Aorta (tissue), 5 donors: ENCODE measurements at regions of chr3 and their contacts with region 1.

Region 1: GRCh38 chr3:169662132-169662842 is 1.2 kb downstream of the MECOM start:
- DNase-seq: peak; percentile 80 to 93
- ATAC-seq: peak; percentile 90
- H3K4me3 ChIP-seq: peak overlapping the region; percentile 78 to 94
- H3K27ac ChIP-seq: peak overlapping the region; percentile 91 to 95
- H3K4me1 ChIP-seq: no peaks in the 10 kb centered on the region
- H3K27me3 ChIP-seq: no peaks in the 10 kb centered on the region

Region 2: GRCh38 chr3:169149349-169149890 is 512.9 kb before region 1 on chr3:
- intact Hi-C with region 1: loop called (anchors 1 to 2 kb)
- DNase-seq: peak; percentile 86 to 94
- ATAC-seq: peak; percentile 90
- H3K4me3 ChIP-seq: peak overlapping the region; percentile 25 to 65
- H3K27ac ChIP-seq: peak overlapping the region in 1 of 2 donors; percentile 38
- H3K4me1 ChIP-seq: peaks cover 0 to 2% of the 10 kb centered on the region in 2 donors
- H3K27me3 ChIP-seq: no peaks in the 10 kb centered on the region

Region 3: DNA sequence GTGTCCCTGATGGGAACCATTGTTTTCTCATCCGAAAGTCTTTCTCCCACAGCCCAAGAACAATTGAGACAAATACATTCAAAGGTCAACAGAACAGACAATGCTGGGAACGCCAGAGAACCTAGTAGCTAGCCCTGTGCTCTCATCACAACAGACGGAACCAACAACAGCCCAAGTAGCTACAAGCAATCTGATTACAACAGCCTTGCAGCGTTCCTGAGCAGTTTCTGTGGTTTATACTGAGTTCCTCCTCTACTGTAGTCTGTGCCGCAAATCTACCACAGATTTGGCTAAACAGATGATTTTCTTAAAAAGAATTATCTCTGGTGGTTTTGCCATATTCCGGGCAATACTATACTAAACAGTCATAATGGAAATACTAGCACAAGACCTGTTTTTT is 434.4 kb before region 1 on chr3:
- intact Hi-C with region 1: loop called (anchors 5 to 10 kb)
- DNase-seq: no peak
- ATAC-seq: peak; percentile 51
- H3K4me3 ChIP-seq: peak overlapping the region in 1 of 2 donors; percentile 21
- H3K27ac ChIP-seq: peak overlapping the region; percentile 39 to 67
- H3K4me1 ChIP-seq: peaks cover 0 to 14% of the 10 kb centered on the region in 2 donors
- H3K27me3 ChIP-seq: no peaks in the 10 kb centered on the region

Region 4: DNA sequence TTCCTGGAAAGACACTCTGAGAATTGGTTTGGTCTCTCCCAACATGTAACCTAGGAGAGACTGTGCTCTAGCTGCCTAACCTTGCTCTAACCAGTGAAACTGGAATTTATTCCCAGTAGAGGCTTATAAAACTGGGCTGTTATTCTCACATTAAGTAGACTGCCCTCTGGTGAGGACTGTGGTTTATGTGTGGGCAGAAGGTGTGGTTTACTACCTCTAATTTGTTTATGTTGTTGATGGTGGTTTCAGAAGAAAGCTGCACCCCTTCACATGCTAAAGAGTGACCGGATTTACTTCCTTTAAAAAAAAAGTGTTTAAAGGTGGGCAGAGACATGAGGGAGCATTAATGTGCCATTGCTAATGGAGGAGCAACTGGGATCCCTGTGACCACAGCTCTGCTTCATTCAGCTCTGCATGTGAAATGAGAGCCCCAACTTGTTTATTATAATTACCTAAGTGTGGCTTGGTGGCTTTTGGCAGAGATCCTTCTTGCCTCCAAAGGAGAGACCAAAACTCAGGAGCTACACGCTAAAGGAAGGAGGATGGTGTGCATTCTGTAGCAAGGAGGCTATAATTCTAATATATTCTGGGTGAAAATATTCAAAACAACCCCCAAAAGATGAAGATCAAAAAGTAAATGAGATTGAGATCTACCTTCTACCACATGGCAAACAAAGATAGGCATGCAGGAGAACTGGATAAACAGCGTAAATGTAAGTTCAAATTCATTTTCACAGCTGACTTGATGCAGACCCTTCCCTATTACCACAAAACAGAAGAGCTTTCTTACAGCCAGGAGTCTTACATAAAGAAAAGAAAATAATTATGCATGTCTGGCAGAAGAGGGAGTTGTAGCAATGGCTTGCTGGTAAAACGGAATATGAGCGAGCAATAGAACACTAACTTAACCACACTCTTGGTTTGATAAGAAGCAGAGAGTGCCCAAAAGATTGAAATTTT is 271.7 kb before region 1 on chr3:
- intact Hi-C with region 1: loop called (anchors 2 to 5 kb)
- DNase-seq: no peak
- ATAC-seq: no peak
- H3K4me3 ChIP-seq: no peak overlapping the region
- H3K27ac ChIP-seq: peak overlapping the region; percentile 36 to 94
- H3K4me1 ChIP-seq: peaks cover 4 to 5% of the 10 kb centered on the region in 2 donors
- H3K27me3 ChIP-seq: no peaks in the 10 kb centered on the region

Region 5: DNA sequence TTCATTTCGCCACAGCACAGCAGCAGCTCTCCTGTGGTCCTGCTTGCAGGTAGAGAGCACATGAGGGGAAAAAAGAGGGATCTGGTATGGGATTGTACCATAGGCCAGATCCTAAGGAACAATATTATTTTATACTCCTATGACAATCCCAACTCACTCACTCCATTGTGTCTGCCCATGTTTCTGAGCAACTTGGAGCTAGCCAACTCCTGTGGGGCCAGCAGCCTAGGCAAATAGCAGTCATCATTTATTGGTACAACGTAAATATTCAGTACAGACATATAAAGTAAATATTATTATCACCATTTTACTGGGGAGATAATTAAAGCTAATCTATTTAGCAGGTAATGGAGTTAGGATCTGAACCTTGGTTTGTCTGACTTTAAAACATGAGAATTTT is 147.2 kb before region 1 on chr3:
- intact Hi-C with region 1: no loop called
- DNase-seq: no peak
- ATAC-seq: no peak
- H3K4me3 ChIP-seq: no peak overlapping the region
- H3K27ac ChIP-seq: no peak overlapping the region
- H3K4me1 ChIP-seq: peaks cover 3% of the 10 kb centered on the region in 2 donors
- H3K27me3 ChIP-seq: no peaks in the 10 kb centered on the region

Region 6: GRCh38 chr3:169552533-169552932 is 109.8 kb before region 1 on chr3:
- intact Hi-C with region 1: loop called (anchors 10 kb)
- DNase-seq: no peak
- ATAC-seq: no peak
- H3K4me3 ChIP-seq: no peak overlapping the region
- H3K27ac ChIP-seq: no peak overlapping the region
- H3K4me1 ChIP-seq: peaks cover 4 to 14% of the 10 kb centered on the region in 2 donors
- H3K27me3 ChIP-seq: no peaks in the 10 kb centered on the region

Region 7: GRCh38 chr3:169591983-169592644 is 70.2 kb before region 1 on chr3:
- intact Hi-C with region 1: loop called in 1 of 2 experiments (anchors 5 kb)
- DNase-seq: peak in 1 of 2 donors; percentile 42
- ATAC-seq: peak; percentile 38
- H3K4me3 ChIP-seq: peak overlapping the region in 1 of 2 donors; percentile 48
- H3K27ac ChIP-seq: peak overlapping the region; percentile 11 to 41
- H3K4me1 ChIP-seq: peaks cover 2 to 7% of the 10 kb centered on the region in 2 donors
- H3K27me3 ChIP-seq: no peaks in the 10 kb centered on the region

Region 8: GRCh38 chr3:169879845-169880575 is 217.7 kb after region 1 on chr3:
- intact Hi-C with region 1: no loop called
- DNase-seq: no peak
- ATAC-seq: no peak
- H3K4me3 ChIP-seq: no peak overlapping the region
- H3K27ac ChIP-seq: no peak overlapping the region
- H3K4me1 ChIP-seq: no peaks in the 10 kb centered on the region
- H3K27me3 ChIP-seq: no peaks in the 10 kb centered on the region